WTC11 (cell line): ENCODE measurements at regions of chr15 and their contacts with region 1.

Region 1: DNA sequence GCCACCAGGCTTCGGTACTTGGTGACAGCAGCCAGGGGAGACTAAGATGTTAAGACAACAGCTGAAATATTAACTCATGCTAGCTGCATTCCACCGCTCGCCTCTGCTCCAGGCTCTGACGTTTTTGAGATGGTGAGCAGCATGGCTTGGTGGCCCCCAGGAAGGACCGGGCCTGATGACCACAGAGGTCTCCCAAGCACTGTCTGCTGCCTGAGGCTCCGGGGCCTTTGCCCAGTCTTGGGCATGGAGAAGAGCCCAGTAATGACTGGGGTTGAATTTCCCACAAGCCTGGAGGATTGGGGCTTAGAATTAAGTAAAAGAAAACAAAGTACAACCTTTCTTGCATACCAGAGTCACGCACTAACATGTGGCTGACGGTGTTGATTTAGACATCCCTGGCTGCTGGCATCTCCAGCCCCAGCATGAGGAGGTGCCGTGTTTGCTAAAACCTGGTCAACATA is 243.6 kb upstream of the LYSMD4 start:
- DNase-seq: no peak
- ATAC-seq: no peak
- H3K4me3 Mint-ChIP-seq: no peak overlapping the region
- H3K27ac Mint-ChIP-seq: no peak overlapping the region
- H3K4me1 Mint-ChIP-seq: peaks cover 20% of the 10 kb centered on the region
- H3K27me3 Mint-ChIP-seq: no peaks in the 10 kb centered on the region; the same call in 1 of the 2 replicates
- CTCF ChIP-seq: no peak

Region 2: GRCh38 chr15:99928429-99928981 is 48.3 kb before region 1 on chr15:
- CTCF ChIA-PET with region 1: interaction called, 10 read pairs
- POLR2A ChIA-PET with region 1: no interaction called
- DNase-seq: peak; percentile 55
- ATAC-seq: peak; percentile 13
- H3K4me3 Mint-ChIP-seq: peak overlapping the region; percentile 81
- H3K27ac Mint-ChIP-seq: no peak overlapping the region
- H3K4me1 Mint-ChIP-seq: peaks cover 31% of the 10 kb centered on the region
- H3K27me3 Mint-ChIP-seq: peaks cover 39% of the 10 kb centered on the region
- CTCF ChIP-seq: peak; percentile 49